OCI-LY7 (cell line): ENCODE measurements at regions of chr14 and their contacts with region 1.

Region 1: DNA sequence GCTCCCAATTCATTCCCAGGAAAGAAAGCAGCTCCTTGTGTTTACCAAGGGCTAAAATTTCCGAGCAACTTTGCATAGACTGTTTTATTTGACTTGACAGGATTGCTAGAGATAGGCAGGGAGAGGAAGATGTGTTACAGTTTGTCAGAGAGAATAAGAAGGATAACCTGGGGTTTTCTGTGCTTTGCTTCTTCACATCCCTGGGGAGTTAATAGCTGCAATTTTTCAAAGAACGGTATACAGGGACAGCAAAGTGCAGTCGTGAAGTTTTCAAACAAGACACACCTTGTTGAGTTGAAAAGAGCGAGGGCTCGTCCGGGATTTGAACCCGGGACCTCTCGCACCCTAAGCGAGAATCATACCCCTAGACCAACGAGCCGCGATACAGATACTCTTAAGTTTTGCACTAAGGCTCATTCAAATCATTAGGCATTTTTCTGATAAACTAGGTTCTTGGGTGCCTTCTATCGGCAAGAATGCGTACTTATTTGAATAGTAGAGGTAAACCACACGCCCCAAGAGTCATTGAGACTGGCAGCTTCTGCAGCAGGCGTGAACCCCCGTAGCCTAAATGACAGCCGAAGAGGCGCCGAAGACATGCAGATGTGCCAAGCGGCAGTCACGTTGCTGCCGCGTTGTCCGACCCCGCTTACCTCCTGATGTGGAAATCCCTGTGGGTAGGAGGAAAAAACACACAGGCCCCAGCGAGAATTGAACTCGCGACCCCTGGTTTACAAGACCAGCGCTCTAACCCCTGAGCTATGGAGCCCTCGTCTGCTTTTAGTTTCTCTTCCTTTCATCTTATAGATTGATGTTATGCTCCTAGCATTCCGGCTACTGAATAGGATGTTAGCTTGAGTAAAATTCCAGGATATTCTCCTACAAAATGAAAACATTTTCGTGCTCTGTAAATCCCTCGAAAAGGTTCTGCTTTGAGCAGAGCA is 22.2 kb upstream of the RNASE12 start:
- DNase-seq: peak; percentile 93
- H3K4me3 ChIP-seq: peak overlapping the region; percentile 72
- H3K27ac ChIP-seq: peak overlapping the region; percentile 11
- H3K4me1 ChIP-seq: peaks cover 47% of the 10 kb centered on the region
- CTCF ChIP-seq: peak; percentile 79

Region 2: DNA sequence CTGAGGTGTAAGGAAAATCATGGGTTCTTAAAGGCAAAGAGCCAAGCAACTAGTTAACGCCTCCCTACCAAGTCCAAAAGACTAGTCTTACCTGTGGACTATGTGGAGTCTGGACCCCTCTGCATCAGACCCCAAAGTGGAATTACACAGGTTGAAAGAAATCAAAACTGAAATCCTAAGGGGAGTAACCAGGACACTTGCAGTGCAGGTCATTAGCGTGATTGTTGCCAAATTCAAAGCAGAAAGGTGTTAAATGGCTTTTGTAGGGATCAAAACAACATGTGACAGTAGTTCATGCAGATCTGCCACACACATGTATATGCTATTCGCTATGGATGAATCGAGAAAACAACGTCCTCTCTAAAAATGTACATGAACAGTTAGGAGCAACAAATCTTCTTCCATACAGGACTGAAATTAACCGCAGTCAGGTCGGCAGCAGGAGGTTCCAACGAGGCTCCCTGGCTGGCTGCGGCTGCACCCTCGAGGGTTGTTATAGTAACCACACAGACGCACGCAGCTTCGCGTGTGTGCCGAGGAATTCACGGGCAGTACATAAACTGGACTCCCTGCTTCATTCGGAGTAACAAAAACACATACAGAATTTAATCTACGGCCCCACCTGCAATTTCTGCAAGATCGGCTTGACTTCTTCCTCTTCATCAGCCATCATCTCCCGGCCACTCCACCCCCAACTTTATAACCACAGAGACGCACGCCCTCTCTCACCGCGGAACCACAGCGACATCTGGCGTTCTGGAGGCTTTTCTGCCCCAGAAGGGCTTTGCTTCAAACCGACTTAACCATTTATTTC is 307.9 kb before region 1 on chr14 and contains the start of gene TTC5:
- CTCF ChIA-PET with region 1: no interaction called
- POLR2A ChIA-PET with region 1: interaction called, 4 read pairs
- intact Hi-C with region 1: loop called (anchors 2 kb)
- DNase-seq: peak; percentile 90
- H3K4me3 ChIP-seq: peak within 1 kb of the TSS; percentile 84
- H3K27ac ChIP-seq: peak within 1 kb of the TSS; percentile 29
- H3K4me1 ChIP-seq: peaks cover 14% of the 10 kb centered on the region
- CTCF ChIP-seq: peak; percentile 98
- total RNA-seq, gene TTC5: 14.9 and 17.9 TPM in 2 replicates

Region 3: DNA sequence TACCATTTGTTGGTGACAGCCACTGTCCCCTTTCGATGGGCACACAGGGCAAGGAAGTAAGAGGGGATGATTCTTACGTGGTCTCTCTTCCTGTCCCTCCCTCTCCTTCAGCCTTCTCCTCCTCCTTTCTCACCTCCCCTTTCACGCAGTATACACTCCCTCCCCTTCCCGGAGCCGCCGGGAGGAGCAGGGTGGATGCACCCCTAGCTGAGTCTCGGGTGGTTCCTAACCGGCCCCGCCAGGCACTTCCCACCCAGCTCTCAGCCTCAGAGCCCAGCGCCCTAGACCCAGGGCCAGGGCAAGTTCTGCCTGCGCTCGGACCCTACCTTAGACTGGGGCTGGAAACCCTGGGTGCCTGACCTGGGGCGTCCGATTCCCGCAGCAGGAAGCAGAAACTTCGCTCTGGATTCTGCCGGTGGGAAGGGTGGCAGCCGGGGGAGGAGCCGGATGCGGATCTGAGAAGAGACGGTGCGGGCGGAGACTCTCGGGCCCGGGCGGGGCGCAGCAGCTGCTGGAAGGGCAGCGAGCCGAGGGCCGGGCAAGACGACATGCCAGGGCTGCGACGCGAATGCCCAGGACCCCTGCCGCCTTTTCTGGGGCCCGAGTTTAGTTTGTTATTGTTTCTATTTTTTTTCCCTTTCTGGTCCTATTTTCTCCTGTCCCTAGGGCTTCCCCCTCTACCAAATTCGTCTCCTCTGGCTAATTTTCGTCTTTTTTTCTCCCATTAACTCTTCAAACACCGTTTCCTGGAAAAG is 200.1 kb before region 1 on chr14 and contains the start of gene TEP1:
- CTCF ChIA-PET with region 1: no interaction called
- POLR2A ChIA-PET with region 1: no interaction called
- intact Hi-C with region 1: loop called (anchors 2 kb)
- DNase-seq: peak; percentile 76
- H3K4me3 ChIP-seq: peak within 1 kb of the TSS; percentile 77
- H3K27ac ChIP-seq: peak within 1 kb of the TSS; percentile 48
- H3K4me1 ChIP-seq: peaks cover 37% of the 10 kb centered on the region
- CTCF ChIP-seq: no peak
- total RNA-seq, gene TEP1: 12.9 and 13.4 TPM in 2 replicates

Region 4: DNA sequence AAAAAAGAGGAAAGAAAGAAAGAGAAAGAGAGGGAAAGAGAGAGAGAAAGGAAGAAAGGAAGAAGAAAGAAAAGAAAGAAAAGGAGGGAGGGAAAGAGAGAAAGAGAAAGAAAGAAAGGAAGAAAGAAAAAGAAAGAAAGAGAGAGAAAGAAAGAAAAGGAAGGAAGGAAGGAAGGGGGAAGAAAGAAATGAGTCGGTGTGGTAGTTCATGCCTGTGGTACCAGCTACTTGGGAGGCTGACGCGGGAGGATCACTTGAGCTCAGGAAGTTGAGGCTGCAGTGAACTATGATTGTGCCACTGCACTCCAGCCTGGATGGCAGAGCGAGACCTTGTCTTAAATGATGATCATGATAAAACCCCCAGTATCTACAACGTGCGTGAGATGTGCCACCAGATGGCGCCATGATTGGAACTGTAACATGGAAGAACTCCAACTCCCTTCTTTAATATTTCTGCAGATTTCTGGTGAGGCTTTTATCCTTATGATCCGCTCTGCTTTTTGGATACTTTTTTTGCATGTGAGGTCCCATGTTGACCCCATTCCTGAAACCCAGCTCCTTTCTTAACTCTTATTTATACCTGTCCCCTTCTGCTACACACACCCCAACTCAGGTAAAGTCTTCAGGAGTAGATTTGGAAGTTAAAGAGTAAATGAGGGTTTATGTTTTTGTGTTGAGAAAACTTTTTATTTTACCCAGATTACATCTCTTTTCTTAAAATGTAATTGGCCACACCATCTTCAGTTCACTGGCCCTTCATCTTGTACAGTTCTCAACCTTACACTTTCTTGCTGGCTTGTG is 82.4 kb before region 1 on chr14:
- CTCF ChIA-PET with region 1: no interaction called
- POLR2A ChIA-PET with region 1: no interaction called
- intact Hi-C with region 1: loop called (anchors 2 kb)
- DNase-seq: peak; percentile 74
- H3K4me3 ChIP-seq: no peak overlapping the region
- H3K27ac ChIP-seq: no peak overlapping the region
- H3K4me1 ChIP-seq: no peaks in the 10 kb centered on the region
- CTCF ChIP-seq: peak; percentile 88

Region 5: DNA sequence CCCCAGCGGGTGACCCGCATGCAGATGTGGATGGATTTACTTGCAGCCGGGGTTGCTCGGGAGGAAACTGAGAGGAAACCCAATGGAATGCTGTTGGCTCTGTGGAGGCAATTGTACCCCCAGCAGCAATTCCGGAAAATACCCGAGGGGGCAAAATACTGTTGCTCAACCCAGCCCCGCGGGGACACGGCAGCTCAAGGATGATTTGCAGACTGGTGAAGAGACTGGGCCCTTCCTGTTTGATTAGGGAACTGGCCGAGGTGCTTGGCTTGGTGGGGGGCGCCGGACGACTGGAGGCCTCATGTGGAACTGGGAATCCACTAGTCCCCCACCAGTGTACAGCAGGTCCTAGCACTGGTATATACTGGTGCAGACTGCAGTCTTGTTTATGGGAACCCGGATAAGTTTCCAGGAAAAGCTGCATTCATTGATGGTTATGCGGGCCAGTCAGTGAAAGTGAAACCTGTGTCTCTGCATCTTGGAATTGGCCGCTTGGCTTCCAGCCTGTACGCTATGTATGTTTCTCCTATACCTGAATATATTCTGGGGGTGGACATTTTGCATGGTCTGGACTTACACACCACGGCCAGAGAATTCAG is 11.8 kb before region 1 on chr14:
- CTCF ChIA-PET with region 1: no interaction called
- POLR2A ChIA-PET with region 1: no interaction called
- intact Hi-C with region 1: no loop called
- DNase-seq: no peak
- H3K4me3 ChIP-seq: no peak overlapping the region
- H3K27ac ChIP-seq: no peak overlapping the region
- H3K4me1 ChIP-seq: no peaks in the 10 kb centered on the region
- CTCF ChIP-seq: no peak

Region 6: DNA sequence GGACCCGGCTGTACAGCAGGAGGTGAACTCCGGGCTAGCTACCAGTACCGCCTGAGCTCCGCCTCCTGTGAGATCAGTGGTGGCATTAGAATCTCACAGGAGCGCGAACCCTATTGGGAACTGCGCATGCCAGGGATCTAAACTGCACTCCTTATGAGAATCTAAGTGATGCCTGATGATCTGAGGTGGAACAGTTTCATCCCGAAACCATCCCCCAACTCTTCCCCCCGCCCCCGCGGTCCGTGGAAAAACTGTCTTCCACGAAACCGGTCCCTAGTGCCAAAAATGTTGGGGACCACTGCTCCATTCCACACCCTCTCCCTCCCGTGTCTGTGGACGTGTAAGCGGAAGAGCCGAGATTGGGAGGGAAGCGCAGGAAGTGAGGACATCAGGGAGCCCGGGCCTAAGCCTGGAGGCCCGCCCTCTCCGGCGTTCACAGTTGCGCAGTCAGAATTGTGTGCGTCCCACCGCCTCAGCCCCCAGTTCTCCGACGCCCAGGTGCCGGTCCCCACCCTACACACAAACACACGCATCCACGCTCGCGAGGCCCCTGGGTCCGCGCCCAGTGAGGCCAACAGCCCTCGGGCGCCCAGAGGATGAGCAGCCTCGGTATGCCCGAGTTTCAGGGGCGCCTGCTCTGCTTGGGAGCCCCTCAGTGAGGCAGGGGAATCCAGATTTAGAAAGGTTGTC is 69.2 kb after region 1 on chr14:
- CTCF ChIA-PET with region 1: interaction called, 4 read pairs
- POLR2A ChIA-PET with region 1: interaction called, 5 read pairs
- intact Hi-C with region 1: loop called (anchors 1 kb)
- DNase-seq: peak; percentile 68
- H3K4me3 ChIP-seq: peak overlapping the region; percentile 74
- H3K27ac ChIP-seq: peak overlapping the region; percentile 49
- H3K4me1 ChIP-seq: peaks cover 42% of the 10 kb centered on the region
- CTCF ChIP-seq: no peak